GM23248 (cell line): ENCODE measurements at regions of chr2 and their contacts with region 1.

Region 1: DNA sequence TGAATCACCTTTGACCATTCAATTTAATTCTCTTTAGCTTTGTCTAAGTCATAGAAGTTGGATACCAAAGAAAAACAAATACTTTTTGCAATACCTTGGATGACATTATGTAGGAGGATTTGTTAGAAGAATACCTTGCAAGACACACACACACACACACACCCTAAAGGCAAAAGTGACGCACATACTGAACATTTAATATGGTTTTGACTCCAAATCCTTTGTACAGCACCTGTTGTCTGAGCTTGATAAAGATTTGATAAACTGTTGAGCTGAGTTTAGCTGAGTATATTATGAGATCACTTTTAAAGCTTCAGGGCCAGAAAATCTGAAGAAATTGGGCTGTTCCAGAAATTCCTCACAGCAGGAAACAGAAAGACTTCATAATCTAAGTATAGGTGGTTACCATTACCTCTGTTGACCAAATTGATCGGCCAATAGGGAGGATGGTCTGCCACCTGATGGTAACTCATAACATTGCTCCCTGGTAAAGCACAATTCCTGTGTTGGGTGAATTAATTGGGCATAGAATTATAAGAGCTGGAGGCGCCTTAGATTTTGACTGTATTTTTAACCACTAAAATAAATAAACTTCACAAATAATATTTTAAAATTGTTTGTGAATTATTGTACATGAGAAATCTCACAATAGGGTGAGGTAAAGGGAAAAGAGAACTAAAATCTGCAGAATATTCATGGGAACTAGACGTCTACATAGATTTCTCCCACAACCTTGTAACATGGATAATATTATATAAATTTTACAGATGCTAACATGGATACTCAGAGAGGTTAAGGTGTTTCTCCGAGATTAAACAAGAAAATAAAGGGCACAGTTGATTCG is 21.9 kb upstream of the RPIA start:
- DNase-seq: peak; percentile 65
- H3K4me3 ChIP-seq: no peak overlapping the region
- H3K27ac ChIP-seq: no peak overlapping the region
- H3K4me1 ChIP-seq: no peaks in the 10 kb centered on the region
- H3K27me3 ChIP-seq: no peaks in the 10 kb centered on the region; the same call in 1 of the 2 replicates

Region 2: GRCh38 chr2:88521445-88522073 is 148.0 kb before region 1 on chr2:
- in situ Hi-C with region 1: no loop called
- DNase-seq: no peak
- H3K4me3 ChIP-seq: no peak overlapping the region
- H3K27ac ChIP-seq: no peak overlapping the region
- H3K4me1 ChIP-seq: no peaks in the 10 kb centered on the region
- H3K27me3 ChIP-seq: peaks cover 5% of the 10 kb centered on the region

Region 3: DNA sequence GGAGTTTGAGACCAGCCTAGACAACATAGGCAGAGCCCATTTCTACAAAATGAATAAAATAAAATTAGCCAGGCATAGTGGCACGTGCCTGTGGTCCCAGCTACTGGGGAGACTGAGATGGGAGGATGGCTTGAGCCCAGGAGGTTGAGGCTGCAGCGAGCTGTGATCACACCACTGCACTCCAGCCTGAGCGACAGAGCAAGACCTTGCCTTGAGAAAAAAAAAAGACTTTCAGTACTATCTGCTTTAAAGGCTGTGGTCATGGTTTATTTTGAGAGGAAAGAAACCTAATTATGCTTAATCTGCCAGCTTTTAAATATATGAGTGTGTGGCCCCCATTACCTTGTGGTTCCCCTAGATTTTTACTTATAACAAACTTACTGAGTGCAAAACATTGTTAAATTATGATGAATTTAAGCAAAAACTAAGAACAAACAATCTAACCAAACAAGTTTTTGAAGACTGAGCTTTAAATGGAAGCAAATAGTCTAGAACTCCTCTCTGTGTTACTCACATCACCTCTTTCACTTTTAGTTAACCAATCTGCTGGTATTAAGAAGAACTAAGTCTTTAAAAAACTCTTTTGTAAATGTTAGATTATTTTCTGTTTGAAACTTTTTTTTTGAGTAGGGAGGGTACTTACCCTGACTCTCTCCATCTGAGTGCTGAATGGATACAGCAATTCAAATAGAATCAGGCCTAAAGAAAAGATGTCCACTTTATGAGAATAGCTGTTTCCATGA is 107.8 kb before region 1 on chr2:
- in situ Hi-C with region 1: no loop called
- DNase-seq: no peak
- H3K4me3 ChIP-seq: no peak overlapping the region
- H3K27ac ChIP-seq: no peak overlapping the region
- H3K4me1 ChIP-seq: no peaks in the 10 kb centered on the region
- H3K27me3 ChIP-seq: no peaks in the 10 kb centered on the region

Region 4: DNA sequence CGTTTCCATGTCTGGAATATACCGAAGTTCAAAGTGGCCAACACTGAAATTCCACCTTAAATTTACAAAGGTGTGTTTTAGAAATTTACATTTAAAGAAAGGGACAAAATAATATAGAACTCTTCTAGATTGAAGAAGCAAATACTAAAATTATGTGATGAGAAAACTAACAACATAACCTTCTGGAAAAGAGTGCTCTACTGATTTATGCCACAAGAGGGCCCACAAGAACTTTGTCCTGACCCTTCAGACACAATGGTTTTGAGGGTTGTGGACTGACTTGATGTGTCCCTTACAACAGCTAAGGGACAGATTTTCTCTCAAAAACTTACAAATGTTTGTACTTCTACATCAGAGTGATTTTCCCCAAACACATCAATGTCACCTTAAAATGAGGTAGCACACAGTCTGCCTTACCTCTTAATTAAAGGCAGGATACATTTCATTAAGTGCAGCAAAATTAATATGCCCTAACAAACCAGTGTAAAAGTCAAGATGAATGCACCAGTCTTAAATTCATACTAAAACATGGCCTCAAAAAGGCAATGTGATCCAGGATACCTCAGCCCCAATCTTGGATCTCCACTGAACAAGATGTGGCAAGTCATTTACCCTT is 78.5 kb before region 1 on chr2:
- in situ Hi-C with region 1: loop called (anchors 5 kb)
- DNase-seq: peak; percentile 79
- H3K4me3 ChIP-seq: no peak overlapping the region
- H3K27ac ChIP-seq: no peak overlapping the region
- H3K4me1 ChIP-seq: no peaks in the 10 kb centered on the region
- H3K27me3 ChIP-seq: no peaks in the 10 kb centered on the region

Region 5: GRCh38 chr2:88927128-88927527 is 257.5 kb after region 1 on chr2:
- in situ Hi-C with region 1: no loop called
- DNase-seq: no peak
- H3K4me3 ChIP-seq: no peak overlapping the region
- H3K27ac ChIP-seq: no peak overlapping the region
- H3K4me1 ChIP-seq: no peaks in the 10 kb centered on the region
- H3K27me3 ChIP-seq: peaks cover 20% of the 10 kb centered on the region